SK-N-SH (cell line): ENCODE measurements at regions of chr6 and their contacts with region 1.

Region 1: GRCh38 chr6:44151348-44152108 is 7.1 kb upstream of the CAPN11 start:
- DNase-seq: peak; percentile 93
- H3K4me3 ChIP-seq: peak overlapping the region in 1 of 2 experiments; percentile 49; a peak in 1 of 4 replicates
- H3K27ac ChIP-seq: no peak overlapping the region
- H3K4me1 ChIP-seq: peaks cover 0 to 3% of the 10 kb centered on the region in 2 experiments; a peak in 1 of 4 replicates
- H3K27me3 ChIP-seq: no peaks in the 10 kb centered on the region
- CTCF ChIP-seq: peak; percentile 97
- EP300 ChIP-seq: no peak
- RAD21 ChIP-seq: peak; percentile 67

Region 2: DNA sequence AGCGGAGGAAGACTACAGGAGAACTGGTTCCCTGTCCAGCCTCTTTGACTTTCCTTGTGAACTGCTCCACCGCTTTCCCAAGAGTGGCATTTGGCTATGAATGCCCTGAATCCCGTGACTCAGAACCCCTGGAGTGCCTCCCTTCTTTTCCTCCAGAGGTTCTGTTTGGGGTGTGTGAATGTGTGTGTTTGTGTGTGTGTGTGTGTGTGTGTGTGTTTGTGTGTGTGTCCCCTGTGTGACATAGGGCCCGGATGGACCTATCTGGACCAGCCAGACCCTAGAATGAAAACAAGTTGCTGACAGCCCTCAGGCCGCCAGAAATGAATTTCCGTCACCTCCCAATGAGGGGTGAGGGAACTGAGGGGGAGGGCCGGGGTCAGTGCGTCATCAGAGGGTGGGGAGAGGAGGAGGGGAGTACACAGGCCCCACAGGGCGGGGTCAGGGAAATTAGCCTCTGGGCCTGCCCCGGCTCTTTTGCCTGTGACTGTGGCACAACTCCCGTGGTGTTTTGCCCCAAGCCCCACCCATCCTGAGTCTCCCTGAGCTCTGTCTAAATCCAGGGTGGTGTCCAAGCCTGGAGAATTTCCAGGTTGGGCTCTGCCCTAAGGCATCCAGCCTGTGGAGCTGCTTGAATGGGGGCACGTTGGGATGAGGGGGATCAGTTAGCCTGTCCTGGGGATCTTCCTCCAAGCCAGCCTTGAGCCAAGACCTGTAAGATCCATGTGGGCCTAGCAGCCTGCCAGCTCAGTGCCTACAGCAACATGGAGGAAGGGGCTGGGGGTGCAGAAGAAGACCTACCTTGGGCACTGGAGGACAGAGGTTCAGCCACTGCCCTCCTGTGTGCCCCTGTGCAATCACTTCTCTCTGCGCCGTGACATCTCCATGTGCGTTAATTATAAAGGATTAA is 448.7 kb before region 1 on chr6:
- CTCF ChIA-PET with region 1: no interaction called
- POLR2A ChIA-PET with region 1: no interaction called
- DNase-seq: no peak
- H3K4me3 ChIP-seq: no peak overlapping the region
- H3K27ac ChIP-seq: no peak overlapping the region
- H3K4me1 ChIP-seq: peaks cover 0 to 16% of the 10 kb centered on the region in 2 experiments; a peak in 1 of 4 replicates
- H3K27me3 ChIP-seq: no peaks in the 10 kb centered on the region; the same call in 1 of the 2 replicates
- CTCF ChIP-seq: no peak
- EP300 ChIP-seq: no peak
- RAD21 ChIP-seq: no peak

Region 3: GRCh38 chr6:44138717-44139350 is 12.7 kb before region 1 on chr6:
- CTCF ChIA-PET with region 1: interaction called, 18 read pairs
- POLR2A ChIA-PET with region 1: no interaction called
- DNase-seq: no peak
- H3K4me3 ChIP-seq: no peak overlapping the region
- H3K27ac ChIP-seq: no peak overlapping the region
- H3K4me1 ChIP-seq: peaks cover 0 to 2% of the 10 kb centered on the region in 2 experiments; a peak in 1 of 4 replicates
- H3K27me3 ChIP-seq: no peaks in the 10 kb centered on the region
- CTCF ChIP-seq: no peak
- EP300 ChIP-seq: no peak
- RAD21 ChIP-seq: no peak

Region 4: GRCh38 chr6:44161997-44162338 is 10.4 kb after region 1 on chr6:
- CTCF ChIA-PET with region 1: interaction called, 22 read pairs
- POLR2A ChIA-PET with region 1: no interaction called
- DNase-seq: no peak
- H3K4me3 ChIP-seq: no peak overlapping the region
- H3K27ac ChIP-seq: no peak overlapping the region
- H3K4me1 ChIP-seq: peaks cover 0 to 3% of the 10 kb centered on the region in 2 experiments; a peak in 1 of 4 replicates
- H3K27me3 ChIP-seq: no peaks in the 10 kb centered on the region
- CTCF ChIP-seq: no peak
- EP300 ChIP-seq: no peak
- RAD21 ChIP-seq: no peak

Region 5: DNA sequence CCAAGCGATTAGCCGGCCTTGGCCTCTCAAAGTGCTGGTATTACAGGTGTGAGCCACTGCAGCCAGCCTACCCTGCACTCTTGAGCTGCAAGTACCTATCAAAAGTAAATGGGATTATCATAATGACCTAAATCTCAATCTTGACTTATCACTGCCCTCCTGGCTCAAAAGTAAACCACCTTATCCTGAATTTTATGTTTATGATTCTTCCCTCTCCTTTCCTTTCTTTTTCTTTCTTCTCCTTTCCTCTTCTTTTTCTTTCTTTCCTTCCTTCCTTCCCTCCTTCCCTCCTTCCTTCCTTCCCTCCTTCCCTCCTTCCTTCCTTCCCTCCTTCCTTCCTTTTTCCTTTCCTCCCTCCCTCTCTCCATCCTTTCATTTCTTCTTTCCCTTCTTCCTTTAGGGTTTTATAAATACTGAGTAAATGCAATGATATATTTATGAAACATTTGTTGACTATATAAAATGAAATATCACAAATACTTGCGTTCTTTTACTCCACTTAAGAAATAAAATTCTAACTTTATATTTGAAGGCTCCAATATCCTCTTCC is 211.9 kb after region 1 on chr6:
- CTCF ChIA-PET with region 1: no interaction called
- POLR2A ChIA-PET with region 1: no interaction called
- DNase-seq: no peak
- H3K4me3 ChIP-seq: no peak overlapping the region
- H3K27ac ChIP-seq: no peak overlapping the region
- H3K4me1 ChIP-seq: no peaks in the 10 kb centered on the region; a peak in 1 of 4 replicates
- H3K27me3 ChIP-seq: peaks cover 15% of the 10 kb centered on the region; the same call in 1 of the 2 replicates
- CTCF ChIP-seq: no peak
- EP300 ChIP-seq: no peak
- RAD21 ChIP-seq: no peak

Region 6: DNA sequence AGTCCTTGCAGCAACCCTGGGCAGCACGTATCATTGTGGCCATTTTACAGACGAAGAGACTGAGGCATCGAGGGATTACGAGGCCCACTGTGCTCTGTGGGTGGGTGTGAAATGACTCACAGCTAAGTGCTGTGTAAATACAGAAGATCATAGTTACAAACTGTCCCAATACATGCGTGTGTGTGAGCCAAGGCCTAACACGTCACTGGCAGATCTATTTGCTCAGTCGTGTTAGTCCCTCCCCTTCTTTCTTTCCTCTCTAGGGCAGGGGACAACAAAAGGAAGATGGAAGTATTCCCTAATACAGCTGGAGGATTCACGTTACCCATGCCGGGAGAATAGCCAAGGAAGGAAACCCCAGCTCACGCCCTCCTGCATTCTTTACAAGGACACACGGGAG is 411.9 kb after region 1 on chr6:
- CTCF ChIA-PET with region 1: no interaction called
- POLR2A ChIA-PET with region 1: no interaction called
- DNase-seq: no peak
- H3K4me3 ChIP-seq: no peak overlapping the region
- H3K27ac ChIP-seq: no peak overlapping the region
- H3K4me1 ChIP-seq: peaks cover 0 to 10% of the 10 kb centered on the region in 2 experiments; a peak in 1 of 4 replicates
- H3K27me3 ChIP-seq: no peaks in the 10 kb centered on the region; the same call in 1 of the 2 replicates
- CTCF ChIP-seq: no peak
- EP300 ChIP-seq: no peak
- RAD21 ChIP-seq: no peak